B cell (primary cell): ENCODE measurements at regions of chr19 and their contacts with region 1.

Region 1: GRCh38 chr19:6125571-6125989 is 9.9 kb upstream of the ACSBG2 start:
- DNase-seq: peak; percentile 82
- ATAC-seq: peak; percentile 92
- H3K4me3 ChIP-seq: no peak overlapping the region
- H3K4me3 Mint-ChIP-seq: no peak overlapping the region
- H3K27ac ChIP-seq: no peak overlapping the region
- H3K27ac Mint-ChIP-seq: no peak overlapping the region
- H3K4me1 ChIP-seq: no peaks in the 10 kb centered on the region
- H3K4me1 Mint-ChIP-seq: no peaks in the 10 kb centered on the region
- H3K27me3 ChIP-seq: no peaks in the 10 kb centered on the region
- H3K27me3 Mint-ChIP-seq: peaks cover 6% of the 10 kb centered on the region
- CTCF ChIP-seq: peak; percentile 96

Region 2: DNA sequence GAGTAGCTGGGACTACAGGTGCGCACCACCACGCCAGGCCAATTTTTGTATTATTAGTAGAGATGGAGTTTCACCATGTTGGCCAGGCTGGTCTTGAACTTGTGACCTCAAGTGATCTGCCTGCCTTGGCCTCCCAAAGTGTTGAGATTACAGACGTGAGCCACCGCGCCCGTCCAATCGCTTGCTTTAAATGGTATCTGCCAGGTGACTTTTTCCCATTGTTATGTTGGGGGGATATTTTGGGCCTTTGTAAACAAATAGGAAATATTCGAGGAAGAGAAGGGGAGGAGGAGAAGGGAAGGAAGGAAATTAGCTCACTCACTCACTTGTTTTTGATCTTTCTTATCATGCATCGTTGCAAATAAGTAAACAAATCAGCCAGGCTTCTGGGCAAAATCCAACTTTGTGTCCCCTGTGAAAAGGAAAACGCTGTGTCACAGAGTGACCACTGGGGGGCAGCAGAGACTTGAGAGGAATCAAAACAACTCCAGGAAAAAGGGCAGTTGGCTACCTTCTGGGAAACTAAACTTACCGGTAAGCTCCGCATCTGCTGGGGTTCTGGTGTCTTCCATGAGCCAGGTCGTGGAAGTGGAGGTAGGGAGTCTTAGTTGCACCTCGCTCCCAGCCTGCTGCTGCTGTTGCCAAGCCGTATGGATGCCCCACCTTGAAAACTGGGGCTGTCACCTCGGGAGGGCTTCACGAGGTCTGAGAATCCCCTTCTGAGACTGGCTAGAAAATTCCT is 138.3 kb before region 1 on chr19:
- CTCF ChIA-PET with region 1: interaction called, 18 read pairs
- POLR2A ChIA-PET with region 1: no interaction called
- intact Hi-C with region 1: loop called (anchors 1 kb)
- DNase-seq: peak; percentile 79
- ATAC-seq: peak; percentile 65
- H3K4me3 ChIP-seq: peak overlapping the region; percentile 36 to 66 (median 48)
- H3K4me3 Mint-ChIP-seq: peak overlapping the region; percentile 82
- H3K27ac ChIP-seq: no peak overlapping the region
- H3K27ac Mint-ChIP-seq: no peak overlapping the region
- H3K4me1 ChIP-seq: peaks cover 0 to 18% of the 10 kb centered on the region in 2 donors
- H3K4me1 Mint-ChIP-seq: peaks cover 20% of the 10 kb centered on the region
- H3K27me3 ChIP-seq: no peaks in the 10 kb centered on the region
- H3K27me3 Mint-ChIP-seq: no peaks in the 10 kb centered on the region
- CTCF ChIP-seq: peak; percentile 97

Region 3: DNA sequence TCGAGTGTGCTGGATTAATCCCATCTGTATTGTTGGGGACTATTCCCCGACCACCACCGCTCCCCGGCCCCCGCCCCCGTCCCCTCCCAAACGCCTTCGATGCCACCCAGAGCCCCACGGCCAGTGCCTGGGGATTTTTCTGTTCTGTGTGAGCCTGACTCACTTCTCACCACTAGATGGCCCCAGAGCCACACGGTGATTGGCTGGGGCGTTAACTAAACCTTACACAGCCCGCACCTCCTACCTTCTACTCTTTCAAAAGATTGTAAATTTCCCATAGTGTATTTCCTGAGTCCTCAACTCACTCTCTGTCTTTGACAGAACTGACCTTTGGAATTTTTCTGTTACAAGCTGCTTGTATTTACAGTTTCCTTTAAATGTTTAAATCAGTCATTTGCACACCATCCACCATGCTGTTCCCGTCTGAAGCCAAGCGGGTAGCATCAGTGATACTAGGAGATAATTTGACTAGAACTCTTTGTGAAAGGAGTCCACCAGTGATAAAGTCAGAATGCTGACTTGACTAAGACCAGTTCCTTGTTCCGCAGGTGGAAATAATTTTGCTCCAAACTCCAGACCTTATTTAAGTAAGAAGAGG is 76.7 kb before region 1 on chr19:
- CTCF ChIA-PET with region 1: interaction called, 188 read pairs
- POLR2A ChIA-PET with region 1: no interaction called
- intact Hi-C with region 1: no loop called
- DNase-seq: peak; percentile 84
- ATAC-seq: peak; percentile 99
- H3K4me3 ChIP-seq: no peak overlapping the region
- H3K4me3 Mint-ChIP-seq: no peak overlapping the region
- H3K27ac ChIP-seq: no peak overlapping the region
- H3K27ac Mint-ChIP-seq: no peak overlapping the region
- H3K4me1 ChIP-seq: no peaks in the 10 kb centered on the region
- H3K4me1 Mint-ChIP-seq: peaks cover 4% of the 10 kb centered on the region
- H3K27me3 ChIP-seq: no peaks in the 10 kb centered on the region
- H3K27me3 Mint-ChIP-seq: no peaks in the 10 kb centered on the region
- CTCF ChIP-seq: peak; percentile 88

Region 4: GRCh38 chr19:6076675-6077463 is 48.7 kb before region 1 on chr19:
- CTCF ChIA-PET with region 1: interaction called, 69 read pairs
- POLR2A ChIA-PET with region 1: no interaction called
- intact Hi-C with region 1: no loop called
- DNase-seq: no peak
- ATAC-seq: no peak
- H3K4me3 ChIP-seq: no peak overlapping the region
- H3K4me3 Mint-ChIP-seq: no peak overlapping the region
- H3K27ac ChIP-seq: no peak overlapping the region
- H3K27ac Mint-ChIP-seq: no peak overlapping the region
- H3K4me1 ChIP-seq: peaks cover 0 to 9% of the 10 kb centered on the region in 2 donors
- H3K4me1 Mint-ChIP-seq: peaks cover 8% of the 10 kb centered on the region
- H3K27me3 ChIP-seq: no peaks in the 10 kb centered on the region
- H3K27me3 Mint-ChIP-seq: no peaks in the 10 kb centered on the region
- CTCF ChIP-seq: no peak

Region 5: DNA sequence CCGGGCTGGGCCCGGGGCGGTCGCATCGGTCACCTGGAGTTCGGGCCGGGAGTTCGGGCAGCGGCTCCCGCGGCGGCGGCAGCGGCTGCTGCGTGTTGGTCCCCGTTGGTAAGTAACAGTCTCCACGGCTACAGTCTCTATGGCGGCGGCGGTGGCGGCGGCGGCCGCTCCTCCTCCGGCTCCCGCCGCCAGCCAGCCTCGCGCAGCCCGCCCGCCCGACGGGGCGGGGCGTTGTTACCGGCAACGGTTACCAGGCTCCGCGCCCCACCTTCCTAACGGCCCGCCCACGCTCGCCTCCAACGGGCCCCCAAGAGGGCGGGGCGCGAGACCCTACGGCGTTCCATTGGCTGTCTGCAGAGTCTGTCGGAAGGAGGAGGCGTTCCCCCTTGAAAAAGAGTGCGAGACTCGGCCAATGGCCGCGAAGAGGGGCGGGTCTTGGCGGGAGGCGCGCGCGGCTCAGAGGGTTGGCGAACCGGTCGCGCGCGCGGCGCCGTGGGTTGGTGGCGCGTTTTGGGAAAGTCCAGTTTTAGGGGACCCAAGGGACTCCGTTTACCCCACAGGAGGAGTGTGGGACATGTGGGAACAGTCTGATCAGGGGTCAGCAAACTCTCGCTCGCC is 15.1 kb before region 1 on chr19 and contains the start of gene RFX2:
- CTCF ChIA-PET with region 1: interaction called, 32 read pairs
- POLR2A ChIA-PET with region 1: interaction called, 17 read pairs
- intact Hi-C with region 1: no loop called
- DNase-seq: peak; percentile 99
- ATAC-seq: peak; percentile 98
- H3K4me3 ChIP-seq: peak within 1 kb of the TSS; percentile 51 to 74 (median 54)
- H3K4me3 Mint-ChIP-seq: peak within 1 kb of the TSS; percentile 88
- H3K27ac ChIP-seq: peak within 1 kb of the TSS; percentile 30 to 38
- H3K27ac Mint-ChIP-seq: peak within 1 kb of the TSS; percentile 81
- H3K4me1 ChIP-seq: peaks cover 21 to 23% of the 10 kb centered on the region in 2 donors
- H3K4me1 Mint-ChIP-seq: peaks cover 21% of the 10 kb centered on the region
- H3K27me3 ChIP-seq: peaks cover 0 to 34% (median 12%) of the 10 kb centered on the region in 4 experiments
- H3K27me3 Mint-ChIP-seq: peaks cover 21% of the 10 kb centered on the region
- CTCF ChIP-seq: no peak
- total RNA-seq, gene RFX2: 6.5 and 8.6 TPM in 2 replicates